ENCODE measurements at regions of chr3 and their contacts with region 1.

Region 1: GRCh38 chr3:52270252-52270754 is 8.1 kb downstream of the WDR82 start:
- DNase-seq: no peak
- H3K4me3 Mint-ChIP-seq: peak overlapping the region; percentile 92
- H3K27ac Mint-ChIP-seq: peak overlapping the region; percentile 89
- H3K4me1 Mint-ChIP-seq: peaks cover 88% of the 10 kb centered on the region
- H3K27me3 Mint-ChIP-seq: no peaks in the 10 kb centered on the region

Region 2: GRCh38 chr3:52253314-52254304 is 16.7 kb before region 1 on chr3:
- CTCF ChIA-PET with region 1: interaction called, 11 read pairs
- POLR2A ChIA-PET with region 1: interaction called, 3 read pairs
- DNase-seq: peak; percentile 91
- H3K4me3 Mint-ChIP-seq: peak overlapping the region; percentile 75
- H3K27ac Mint-ChIP-seq: peak overlapping the region; percentile 97
- H3K4me1 Mint-ChIP-seq: peaks cover 91% of the 10 kb centered on the region
- H3K27me3 Mint-ChIP-seq: no peaks in the 10 kb centered on the region

Measured in activated CD4-positive, alpha-beta T cell treated with anti-CD3 and anti-CD28 coated beads, Interleukin-2, amount 10 ng/mL, durations not matched to agents 7 days and 5 days (primary cell).